Activated CD4-positive, alpha-beta T cell treated with anti-CD3 and anti-CD28 coated beads for 36 hours (primary cell): ENCODE measurements at regions of chr15 and their contacts with region 1.

Region 1: GRCh38 chr15:90931737-90932659 is at the start of gene HDDC3:
- DNase-seq: peak; percentile 96
- ATAC-seq: peak; percentile 68
- H3K4me3 Mint-ChIP-seq: peak within 1 kb of the TSS; percentile 99
- H3K27ac Mint-ChIP-seq: peak within 1 kb of the TSS; percentile 99
- H3K4me1 Mint-ChIP-seq: peaks cover 47% of the 10 kb centered on the region
- H3K27me3 Mint-ChIP-seq: no peaks in the 10 kb centered on the region
- total RNA-seq, gene HDDC3: 34.2 to 41.2 TPM

Region 2: GRCh38 chr15:90233376-90234095 is 698.5 kb before region 1 on chr15 and contains the start of gene CIB1:
- CTCF ChIA-PET with region 1: no interaction called
- POLR2A ChIA-PET with region 1: interaction called, 3 read pairs
- intact Hi-C with region 1: loop called in 1 of 2 experiments (anchors 1 kb)
- DNase-seq: peak; percentile 99
- ATAC-seq: peak; percentile 82
- H3K4me3 Mint-ChIP-seq: peak within 1 kb of the TSS; percentile 99
- H3K27ac Mint-ChIP-seq: peak within 1 kb of the TSS; percentile 97
- H3K4me1 Mint-ChIP-seq: peaks cover 46% of the 10 kb centered on the region
- H3K27me3 Mint-ChIP-seq: no peaks in the 10 kb centered on the region
- total RNA-seq, gene CIB1: 135 to 140 TPM

Region 3: GRCh38 chr15:90660195-90660998 is 271.6 kb before region 1 on chr15:
- CTCF ChIA-PET with region 1: interaction called, 9 read pairs
- POLR2A ChIA-PET with region 1: no interaction called
- intact Hi-C with region 1: loop called in 1 of 2 experiments (anchors 1 kb)
- DNase-seq: peak; percentile 89
- ATAC-seq: peak; percentile 96
- H3K4me3 Mint-ChIP-seq: peak overlapping the region; percentile 52
- H3K27ac Mint-ChIP-seq: peak overlapping the region; percentile 43
- H3K4me1 Mint-ChIP-seq: peaks cover 73% of the 10 kb centered on the region
- H3K27me3 Mint-ChIP-seq: peaks cover 47% of the 10 kb centered on the region

Region 4: DNA sequence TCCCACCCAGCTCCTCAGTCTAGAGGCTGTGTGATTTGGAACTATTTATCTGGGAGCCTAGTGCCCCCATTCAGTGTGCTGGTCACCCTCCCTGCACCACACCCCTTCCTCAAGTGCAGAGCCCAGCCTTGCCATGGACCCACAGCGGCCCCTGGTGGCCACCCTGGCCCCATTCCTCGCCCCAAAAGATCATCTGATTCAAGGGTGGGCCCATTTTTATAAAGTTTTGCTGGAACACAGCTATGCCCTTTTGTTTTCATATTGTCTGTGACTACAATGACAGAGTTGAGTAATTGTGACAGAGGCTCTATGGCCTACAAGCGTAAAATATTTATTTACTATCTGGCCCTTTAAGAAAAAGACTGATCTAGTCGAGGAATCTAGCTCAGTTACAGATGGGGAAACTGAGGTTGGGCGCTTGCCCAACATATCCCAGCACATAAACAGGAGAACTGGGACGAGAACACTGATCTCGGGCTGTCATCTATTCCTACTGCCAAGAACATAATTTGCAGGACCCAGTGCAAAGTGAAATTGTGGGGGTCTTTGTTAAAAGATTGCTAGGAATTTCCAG is 45.9 kb before region 1 on chr15:
- CTCF ChIA-PET with region 1: interaction called, 31 read pairs
- POLR2A ChIA-PET with region 1: no interaction called
- intact Hi-C with region 1: no loop called
- DNase-seq: peak; percentile 90
- ATAC-seq: peak; percentile 43
- H3K4me3 Mint-ChIP-seq: no peak overlapping the region
- H3K27ac Mint-ChIP-seq: peak overlapping the region; percentile 31
- H3K4me1 Mint-ChIP-seq: peaks cover 12% of the 10 kb centered on the region
- H3K27me3 Mint-ChIP-seq: peaks cover 3% of the 10 kb centered on the region

Region 5: GRCh38 chr15:90954712-90955671 is 23.0 kb after region 1 on chr15 and contains the start of gene RCCD1:
- CTCF ChIA-PET with region 1: interaction called, 139 read pairs
- POLR2A ChIA-PET with region 1: interaction called, 14 read pairs
- intact Hi-C with region 1: loop called (anchors 1 to 2 kb)
- DNase-seq: peak; percentile 94
- ATAC-seq: peak; percentile 95
- H3K4me3 Mint-ChIP-seq: peak within 1 kb of the TSS; percentile 84
- H3K27ac Mint-ChIP-seq: peak within 1 kb of the TSS; percentile 95
- H3K4me1 Mint-ChIP-seq: peaks cover 13% of the 10 kb centered on the region
- H3K27me3 Mint-ChIP-seq: no peaks in the 10 kb centered on the region
- total RNA-seq, gene RCCD1: 28.9 to 37.4 TPM

Region 6: GRCh38 chr15:91068966-91069365 is 137.0 kb after region 1 on chr15:
- CTCF ChIA-PET with region 1: no interaction called
- POLR2A ChIA-PET with region 1: no interaction called
- intact Hi-C with region 1: no loop called
- DNase-seq: no peak
- ATAC-seq: no peak
- H3K4me3 Mint-ChIP-seq: no peak overlapping the region
- H3K27ac Mint-ChIP-seq: no peak overlapping the region
- H3K4me1 Mint-ChIP-seq: no peaks in the 10 kb centered on the region
- H3K27me3 Mint-ChIP-seq: peaks cover 22% of the 10 kb centered on the region

Region 7: GRCh38 chr15:91271565-91272153 is 339.7 kb after region 1 on chr15:
- CTCF ChIA-PET with region 1: interaction called, 12 read pairs
- POLR2A ChIA-PET with region 1: no interaction called
- intact Hi-C with region 1: no loop called
- DNase-seq: peak; percentile 74
- ATAC-seq: peak; percentile 64
- H3K4me3 Mint-ChIP-seq: no peak overlapping the region
- H3K27ac Mint-ChIP-seq: no peak overlapping the region
- H3K4me1 Mint-ChIP-seq: peaks cover 2% of the 10 kb centered on the region
- H3K27me3 Mint-ChIP-seq: peaks cover 12% of the 10 kb centered on the region